ENCODE measurements at regions of chr2 and their contacts with region 1.

Region 1: DNA sequence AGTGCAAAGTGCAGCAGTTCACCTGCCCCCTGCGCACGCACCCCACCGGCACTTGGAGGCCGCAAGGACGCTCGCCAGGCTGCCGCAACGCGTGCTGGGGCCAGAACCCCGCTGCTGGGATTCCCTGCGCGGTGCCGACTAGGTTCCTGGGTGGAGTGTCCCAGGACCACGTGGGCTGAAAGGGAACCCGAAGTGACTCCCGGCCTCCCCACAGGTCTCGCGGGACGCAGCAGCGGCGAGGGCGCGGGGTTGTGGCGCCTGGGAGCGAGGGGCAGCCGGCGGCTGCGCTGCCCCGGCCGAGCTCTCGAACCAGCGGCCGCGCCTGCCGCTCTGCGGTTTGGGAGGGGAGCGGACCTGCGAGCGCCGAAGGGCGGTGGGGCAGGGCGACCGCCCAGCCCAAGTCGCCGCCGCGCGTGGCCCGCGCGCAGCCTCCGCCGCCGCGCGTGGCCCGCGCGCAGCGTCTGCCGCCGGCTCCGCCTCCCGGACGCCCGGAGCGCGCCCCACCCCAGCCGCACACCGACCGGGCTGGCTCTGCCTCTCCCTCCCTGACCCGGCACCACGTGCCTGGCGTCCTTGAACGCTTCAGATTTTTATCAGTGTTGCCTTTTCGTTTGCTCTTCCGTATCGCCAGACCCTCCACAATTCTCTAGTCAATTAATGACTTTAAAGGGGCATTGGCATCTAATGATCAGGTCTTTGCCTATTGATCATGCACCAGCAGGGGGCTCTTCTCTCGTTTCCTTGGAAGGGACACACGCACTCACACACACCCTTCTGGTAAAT is at the start of gene FTCDNL1:
- DNase-seq: peak; percentile 61 to 96 (median 78)

Region 2: DNA sequence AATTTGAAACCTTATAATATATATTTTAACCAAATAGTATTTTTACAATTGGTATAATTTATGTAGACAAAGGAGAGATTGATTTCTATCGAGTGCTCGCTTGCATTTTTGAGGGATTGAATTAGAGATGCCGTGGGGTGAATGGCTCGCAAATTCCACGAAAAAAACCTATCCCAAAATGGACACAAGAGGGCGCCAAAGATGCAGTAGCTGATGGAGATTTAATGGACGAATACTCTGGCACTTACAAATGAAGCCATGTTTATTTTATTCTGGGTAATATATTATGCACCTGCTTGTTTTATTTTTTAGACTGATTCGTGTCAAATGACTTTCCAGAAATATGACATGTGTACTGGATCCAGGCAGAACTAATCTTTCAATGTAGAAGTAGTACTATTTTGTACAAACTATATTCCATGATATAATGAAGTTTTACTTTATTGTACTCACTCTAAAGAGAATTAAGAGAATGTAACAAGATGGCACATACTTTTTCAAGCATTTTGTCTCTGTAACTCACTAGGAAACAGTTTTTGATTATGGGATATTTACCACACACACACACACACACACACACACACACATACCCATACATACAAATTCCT is 1541.1 kb before region 1 on chr2:
- intact Hi-C with region 1: loop called (anchors 10 kb)
- DNase-seq: peak in 4 of 10 donors; percentile 46 to 65 (median 54)

Region 3: DNA sequence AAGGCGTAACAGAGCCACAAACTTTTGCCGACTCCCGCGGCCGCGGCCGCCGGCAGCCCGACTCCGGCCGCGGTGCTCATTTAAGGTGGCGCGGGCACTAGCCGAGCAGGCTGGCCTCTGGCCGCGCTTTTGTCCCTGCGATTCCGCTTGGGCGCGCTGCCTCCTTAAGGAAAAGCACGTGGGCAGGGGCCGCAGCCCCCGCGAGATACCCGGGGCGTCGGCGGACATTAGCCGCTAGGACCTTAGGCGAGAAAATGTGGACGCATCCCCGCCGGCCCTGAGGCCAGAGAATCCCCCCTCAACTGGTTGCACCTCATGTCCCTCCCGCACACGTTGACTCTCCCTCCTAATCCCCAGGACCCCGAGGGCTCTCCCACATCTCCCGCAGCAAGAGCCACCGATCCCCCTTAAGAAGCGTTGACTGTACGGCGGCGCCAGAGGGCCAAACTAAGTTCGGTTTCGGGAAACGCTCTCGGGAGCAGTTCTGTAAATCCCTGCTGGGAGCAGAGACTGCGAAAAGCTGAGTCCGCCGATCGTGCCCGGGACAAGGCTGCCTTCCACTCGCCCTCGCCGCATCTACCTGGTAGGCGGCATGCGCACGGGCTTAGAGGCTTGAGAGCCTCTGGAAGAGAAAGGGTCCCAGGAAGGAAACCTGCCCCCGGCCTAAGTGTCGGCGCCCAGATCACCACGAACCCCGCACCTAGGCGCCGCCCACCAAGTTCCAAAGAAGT is 391.5 kb before region 1 on chr2:
- intact Hi-C with region 1: loop called (anchors 10 kb)
- DNase-seq: peak; percentile 88 to 99 (median 94)

Region 4: GRCh38 chr2:199488772-199489400 is 362.0 kb before region 1 on chr2:
- intact Hi-C with region 1: loop called (anchors 10 kb)
- DNase-seq: peak in 6 of 10 donors; percentile 28 to 90 (median 62)

Region 5: DNA sequence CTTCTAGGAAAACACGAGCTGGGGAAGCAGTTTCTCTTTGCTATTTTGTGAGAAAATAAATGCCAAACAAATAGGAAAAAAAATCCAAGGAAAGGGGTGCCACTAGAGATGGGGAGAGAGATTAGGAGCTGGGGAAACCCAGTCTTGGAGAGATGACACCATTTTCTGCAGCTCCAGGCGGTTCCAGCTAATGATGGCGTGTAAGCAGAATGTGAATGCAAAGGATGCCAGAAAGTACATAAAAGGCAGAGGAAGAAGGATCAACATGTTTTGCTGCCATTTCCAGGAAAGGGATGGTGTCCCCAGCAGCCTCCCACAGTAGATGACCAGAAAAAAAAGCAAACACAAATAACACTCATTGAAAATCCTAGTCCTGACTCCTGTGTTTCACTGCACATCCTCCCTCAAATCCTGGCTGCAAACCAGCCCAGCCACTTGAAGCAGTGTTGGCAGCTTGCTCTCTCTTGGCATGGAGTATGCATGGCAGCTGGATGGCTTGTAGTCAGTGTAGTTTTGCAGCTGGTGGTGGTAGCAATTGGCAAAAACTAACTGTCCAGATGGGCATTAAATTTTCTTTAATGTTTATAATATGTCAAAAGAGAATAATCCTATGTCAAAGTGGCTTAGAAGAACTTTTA is 93.6 kb before region 1 on chr2:
- intact Hi-C with region 1: loop called (anchors 2 kb)
- DNase-seq: peak; percentile 75 to 97 (median 85)

Region 6: DNA sequence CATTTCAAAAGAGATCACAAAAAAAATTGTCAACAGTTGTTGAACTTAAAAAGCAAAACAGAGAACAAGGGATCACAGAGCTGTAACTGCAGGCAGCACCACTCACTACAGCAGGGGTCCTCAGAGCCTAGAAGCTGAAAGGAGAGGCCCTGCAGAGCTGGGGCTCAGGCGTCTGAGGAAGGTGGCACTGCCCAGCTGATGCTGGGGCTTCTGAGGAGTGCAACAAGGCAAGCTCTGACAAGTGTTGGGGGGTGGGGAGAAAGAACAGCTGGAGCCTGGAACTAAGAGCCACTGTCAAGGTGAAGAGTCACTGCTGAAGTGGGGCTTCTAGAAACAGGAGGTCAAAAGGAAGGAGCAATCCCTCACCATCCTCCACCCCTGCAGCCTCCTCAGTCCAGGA is 46.1 kb before region 1 on chr2:
- intact Hi-C with region 1: loop called (anchors 5 kb)
- DNase-seq: peak in 1 of 10 donors; percentile 34

Region 7: GRCh38 chr2:199922856-199923255 is 71.9 kb after region 1 on chr2:
- intact Hi-C with region 1: loop called (anchors 10 kb)
- DNase-seq: no peak